ENCODE measurements at regions of chr1 and their contacts with region 1.

Region 1: DNA sequence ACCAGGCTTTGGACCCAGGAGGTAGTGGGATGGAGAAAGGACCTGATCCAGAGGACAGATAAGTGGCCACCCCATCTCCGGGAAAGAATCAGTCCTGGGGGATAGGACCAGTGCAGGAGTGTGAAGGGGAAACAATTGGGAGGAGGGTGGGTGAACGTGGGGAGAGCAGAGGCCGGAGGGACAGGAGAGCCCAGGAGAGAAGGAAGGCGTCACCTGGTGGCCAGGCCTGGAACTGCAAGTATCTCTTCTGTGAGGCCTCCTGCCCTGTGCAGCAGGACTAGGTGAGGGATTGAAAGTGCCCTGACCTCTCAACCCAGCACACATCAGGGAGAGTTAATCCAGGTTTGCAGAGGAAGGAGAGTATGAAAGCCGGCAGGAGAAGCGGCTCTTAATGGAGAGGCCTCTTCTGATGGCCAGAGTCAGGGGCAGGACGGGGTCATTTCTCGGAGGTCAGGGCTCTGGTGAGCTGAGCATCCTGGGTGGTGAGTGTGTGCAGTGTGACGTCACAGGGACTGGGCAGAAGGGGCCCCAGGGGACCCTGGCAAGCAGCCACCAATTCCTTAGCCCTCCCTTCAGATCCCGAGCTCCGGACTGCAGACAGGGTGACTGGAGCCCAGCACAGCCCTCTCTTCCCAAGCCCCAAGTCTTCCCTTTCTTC is 9.2 kb upstream of the LAD1 start:
- DNase-seq: peak; percentile 94
- ATAC-seq: peak; percentile 95
- H3K4me3 Mint-ChIP-seq: no peak overlapping the region
- H3K27ac Mint-ChIP-seq: no peak overlapping the region
- H3K4me1 Mint-ChIP-seq: peaks cover 2% of the 10 kb centered on the region; the same call in 1 of the 2 replicates
- H3K27me3 Mint-ChIP-seq: no peaks in the 10 kb centered on the region; the same call in 1 of the 2 replicates
- CTCF ChIP-seq: peak; percentile 97

Region 2: GRCh38 chr1:201376464-201377374 is 31.6 kb before region 1 on chr1:
- CTCF ChIA-PET with region 1: interaction called, 25 read pairs
- POLR2A ChIA-PET with region 1: no interaction called
- DNase-seq: peak; percentile 86
- ATAC-seq: peak; percentile 81
- H3K4me3 Mint-ChIP-seq: peak overlapping the region; percentile 58
- H3K27ac Mint-ChIP-seq: peak overlapping the region; percentile 98
- H3K4me1 Mint-ChIP-seq: peaks cover 54% of the 10 kb centered on the region
- H3K27me3 Mint-ChIP-seq: peaks cover 7% of the 10 kb centered on the region; the same call in 1 of the 2 replicates
- CTCF ChIP-seq: peak; percentile 56

Region 3: GRCh38 chr1:201385299-201385891 is 22.9 kb before region 1 on chr1:
- CTCF ChIA-PET with region 1: interaction called, 18 read pairs
- POLR2A ChIA-PET with region 1: no interaction called
- DNase-seq: peak; percentile 90
- ATAC-seq: peak; percentile 95
- H3K4me3 Mint-ChIP-seq: no peak overlapping the region
- H3K27ac Mint-ChIP-seq: no peak overlapping the region
- H3K4me1 Mint-ChIP-seq: no peaks in the 10 kb centered on the region; the same call in 1 of the 2 replicates
- H3K27me3 Mint-ChIP-seq: no peaks in the 10 kb centered on the region
- CTCF ChIP-seq: peak; percentile 81

Region 4: GRCh38 chr1:201419746-201420607 is 11.7 kb after region 1 on chr1:
- CTCF ChIA-PET with region 1: interaction called, 10 read pairs
- POLR2A ChIA-PET with region 1: no interaction called
- DNase-seq: no peak
- ATAC-seq: no peak
- H3K4me3 Mint-ChIP-seq: no peak overlapping the region
- H3K27ac Mint-ChIP-seq: no peak overlapping the region
- H3K4me1 Mint-ChIP-seq: peaks cover 9% of the 10 kb centered on the region
- H3K27me3 Mint-ChIP-seq: peaks cover 15% of the 10 kb centered on the region
- CTCF ChIP-seq: no peak

Measured in WTC11 (cell line).